ENCODE measurements at regions of chr5 and their contacts with region 1.

Region 1: GRCh38 chr5:135426102-135427082 is 20.8 kb downstream of the DCANP1 start:
- DNase-seq: peak; percentile 80 to 89 (median 88)
- H3K4me3 ChIP-seq: peak overlapping the region in 3 of 7 experiments; percentile 9 to 52 (median 12)
- H3K27ac ChIP-seq: peak overlapping the region in 1 of 2 experiments; percentile 60
- H3K4me1 ChIP-seq: peaks cover 28 to 50% (median 46%) of the 10 kb centered on the region in 4 experiments
- H3K27me3 ChIP-seq: no peaks in the 10 kb centered on the region

Region 2: DNA sequence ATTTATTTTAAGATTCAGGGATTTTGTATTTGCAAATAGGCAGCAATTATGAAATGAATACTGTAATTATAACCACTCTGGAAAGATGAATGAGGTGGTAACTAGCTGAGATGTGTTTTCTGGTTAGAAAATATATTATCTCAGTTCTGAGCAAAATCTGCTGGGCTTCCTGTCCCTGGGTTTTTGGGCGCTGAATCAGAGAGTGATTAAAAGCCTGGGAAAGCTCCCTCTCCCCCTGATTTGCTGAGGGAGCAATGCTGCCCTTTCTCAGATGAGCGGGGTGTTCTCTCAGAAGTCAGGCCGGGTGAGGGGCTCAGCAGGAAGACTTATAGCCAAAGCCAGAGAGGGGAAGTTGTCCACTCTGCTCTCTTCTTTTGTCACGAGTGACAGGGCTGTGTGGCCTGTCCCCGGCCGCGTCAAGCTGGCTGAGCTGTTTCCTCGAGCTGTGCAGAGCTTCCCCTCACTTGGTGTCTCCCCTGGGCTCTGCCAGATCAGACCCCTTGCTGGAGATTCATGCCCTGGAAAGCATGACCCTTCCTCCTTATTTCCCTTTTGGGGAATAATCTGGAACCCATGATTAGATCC is 352.5 kb before region 1 on chr5:
- CTCF ChIA-PET with region 1: no interaction called
- POLR2A ChIA-PET with region 1: no interaction called
- DNase-seq: no peak
- H3K4me3 ChIP-seq: no peak overlapping the region
- H3K27ac ChIP-seq: no peak overlapping the region
- H3K4me1 ChIP-seq: no peaks in the 10 kb centered on the region
- H3K27me3 ChIP-seq: peaks cover 0 to 16% (median 2%) of the 10 kb centered on the region in 5 experiments

Region 3: DNA sequence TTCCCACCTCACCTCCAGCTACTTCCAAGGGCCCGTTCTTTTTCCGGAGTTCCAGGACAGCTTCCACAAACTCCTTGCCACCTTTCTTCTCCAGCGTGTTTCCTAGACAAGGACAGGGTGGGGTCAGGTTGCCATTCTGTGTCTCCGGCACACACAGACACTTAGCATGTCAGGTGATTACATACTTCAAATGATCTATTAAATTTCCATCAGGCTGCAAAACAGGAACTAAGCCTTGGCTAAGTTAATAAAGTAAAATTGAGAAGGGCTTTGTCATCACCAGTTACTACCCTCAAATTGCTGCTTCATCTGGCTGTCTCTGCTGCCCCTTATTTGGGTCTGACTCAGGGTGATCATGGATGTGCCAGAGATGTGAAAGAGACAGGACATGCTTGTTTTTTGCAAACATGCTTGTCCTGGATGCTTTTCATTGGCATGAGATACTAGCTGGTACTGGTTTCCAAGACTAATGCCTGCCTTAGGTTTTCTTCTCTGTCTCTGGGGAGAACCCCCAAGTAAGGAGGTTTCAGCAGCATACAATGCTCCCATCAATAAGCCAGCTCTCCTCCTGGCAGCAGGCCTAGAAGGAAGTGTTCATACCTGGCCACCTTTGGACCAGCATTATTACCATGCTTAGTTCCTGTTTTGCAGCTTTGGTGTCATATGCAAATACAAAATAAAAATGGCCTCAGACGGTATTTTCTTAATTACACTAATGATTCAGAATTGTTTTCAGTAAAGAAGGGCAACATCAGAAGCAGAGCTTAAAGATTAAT is 80.2 kb before region 1 on chr5:
- CTCF ChIA-PET with region 1: interaction called, 11 read pairs
- POLR2A ChIA-PET with region 1: no interaction called
- DNase-seq: peak in 2 of 3 donors; percentile 51 to 65
- H3K4me3 ChIP-seq: no peak overlapping the region
- H3K27ac ChIP-seq: no peak overlapping the region
- H3K4me1 ChIP-seq: peaks cover 0 to 39% (median 22%) of the 10 kb centered on the region in 4 experiments
- H3K27me3 ChIP-seq: no peaks in the 10 kb centered on the region

Region 4: DNA sequence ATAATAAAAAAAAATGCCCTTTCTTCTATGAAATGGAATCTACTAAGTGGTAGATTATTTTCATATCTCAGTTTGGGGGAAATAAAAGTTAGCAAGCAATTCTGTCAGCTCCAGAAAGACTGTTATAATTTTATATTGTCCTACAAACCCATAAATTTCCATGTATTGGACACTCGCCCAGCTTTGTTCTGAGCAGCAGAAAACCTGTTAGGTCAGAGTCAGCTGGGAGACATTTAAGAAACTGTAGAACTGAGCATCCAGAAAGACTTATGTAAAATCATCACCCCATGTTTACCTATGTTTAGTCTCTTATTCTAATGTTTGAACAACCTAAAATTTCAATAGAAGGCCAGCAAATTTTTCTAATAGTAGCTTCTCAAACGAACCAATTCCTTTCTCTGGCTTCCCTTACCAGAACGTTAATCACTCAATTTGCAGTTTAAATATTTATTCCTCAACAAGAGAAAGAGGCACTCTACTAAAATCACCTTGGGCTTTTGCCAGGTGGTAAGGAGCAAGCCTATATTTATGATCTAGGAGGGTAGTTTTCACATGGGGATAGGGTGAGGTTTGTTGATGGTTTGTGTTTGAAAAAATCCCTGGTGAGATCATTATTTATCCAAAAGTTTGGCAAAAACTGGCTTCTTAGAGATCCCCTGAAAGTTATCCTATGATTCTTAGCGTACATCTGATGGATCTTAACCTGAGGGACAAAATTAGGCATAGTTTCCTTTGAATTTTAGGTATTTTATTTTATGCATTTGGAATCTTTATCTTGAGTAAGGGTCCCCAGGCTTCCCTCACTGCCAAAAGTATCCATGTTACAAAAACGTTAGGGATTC is 61.8 kb before region 1 on chr5:
- CTCF ChIA-PET with region 1: interaction called, 108 read pairs
- POLR2A ChIA-PET with region 1: interaction called, 4 read pairs
- DNase-seq: no peak
- H3K4me3 ChIP-seq: no peak overlapping the region
- H3K27ac ChIP-seq: peak overlapping the region in 1 of 2 experiments; percentile 55
- H3K4me1 ChIP-seq: peaks cover 16 to 86% (median 67%) of the 10 kb centered on the region in 4 experiments
- H3K27me3 ChIP-seq: no peaks in the 10 kb centered on the region

Region 5: DNA sequence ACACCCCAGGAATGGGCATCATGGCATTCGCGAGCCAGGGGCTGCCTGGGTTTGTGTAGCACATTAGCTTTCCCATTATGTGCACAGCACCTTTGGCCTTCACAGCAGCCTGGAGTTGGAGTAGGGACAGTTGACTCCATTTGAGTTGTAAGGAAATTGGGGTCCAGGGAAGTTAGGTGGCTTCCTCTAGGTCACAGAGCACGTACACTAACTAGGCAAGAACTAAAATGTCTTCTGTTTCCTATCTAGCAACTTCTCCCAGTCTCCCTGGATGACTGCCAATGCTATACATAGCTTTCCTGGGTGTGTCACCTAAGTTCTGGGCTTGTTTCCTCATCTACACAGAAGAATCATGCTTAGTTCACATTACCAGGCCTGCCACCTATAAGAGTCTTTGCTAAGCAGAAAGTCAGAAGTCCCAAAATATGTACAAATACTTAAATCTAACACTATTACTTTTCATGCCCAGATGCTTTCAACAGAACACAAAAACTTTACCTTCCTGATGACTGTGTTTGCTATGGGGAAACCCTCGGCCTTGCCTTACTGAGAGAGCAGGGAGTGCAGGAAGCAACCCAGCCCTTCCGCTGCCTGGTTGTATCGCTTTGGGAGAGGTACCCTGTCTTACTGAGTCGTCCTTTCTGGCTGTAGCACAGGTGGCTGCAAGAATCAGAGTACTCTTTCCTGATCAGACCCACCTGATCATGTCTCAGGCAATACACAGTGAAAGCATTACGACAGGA is 39.3 kb before region 1 on chr5:
- CTCF ChIA-PET with region 1: interaction called, 76 read pairs
- POLR2A ChIA-PET with region 1: no interaction called
- DNase-seq: peak in 2 of 3 donors; percentile 56 to 67
- H3K4me3 ChIP-seq: peak overlapping the region in 1 of 7 experiments; percentile 39
- H3K27ac ChIP-seq: peak overlapping the region; percentile 20 to 72
- H3K4me1 ChIP-seq: peaks cover 18 to 100% (median 82%) of the 10 kb centered on the region in 4 experiments
- H3K27me3 ChIP-seq: no peaks in the 10 kb centered on the region

Region 6: GRCh38 chr5:135405082-135405481 is 21.3 kb before region 1 on chr5:
- CTCF ChIA-PET with region 1: interaction called, 42 read pairs
- POLR2A ChIA-PET with region 1: no interaction called
- DNase-seq: no peak
- H3K4me3 ChIP-seq: no peak overlapping the region
- H3K27ac ChIP-seq: no peak overlapping the region
- H3K4me1 ChIP-seq: peaks cover 0 to 23% (median 14%) of the 10 kb centered on the region in 4 experiments
- H3K27me3 ChIP-seq: no peaks in the 10 kb centered on the region

Region 7: DNA sequence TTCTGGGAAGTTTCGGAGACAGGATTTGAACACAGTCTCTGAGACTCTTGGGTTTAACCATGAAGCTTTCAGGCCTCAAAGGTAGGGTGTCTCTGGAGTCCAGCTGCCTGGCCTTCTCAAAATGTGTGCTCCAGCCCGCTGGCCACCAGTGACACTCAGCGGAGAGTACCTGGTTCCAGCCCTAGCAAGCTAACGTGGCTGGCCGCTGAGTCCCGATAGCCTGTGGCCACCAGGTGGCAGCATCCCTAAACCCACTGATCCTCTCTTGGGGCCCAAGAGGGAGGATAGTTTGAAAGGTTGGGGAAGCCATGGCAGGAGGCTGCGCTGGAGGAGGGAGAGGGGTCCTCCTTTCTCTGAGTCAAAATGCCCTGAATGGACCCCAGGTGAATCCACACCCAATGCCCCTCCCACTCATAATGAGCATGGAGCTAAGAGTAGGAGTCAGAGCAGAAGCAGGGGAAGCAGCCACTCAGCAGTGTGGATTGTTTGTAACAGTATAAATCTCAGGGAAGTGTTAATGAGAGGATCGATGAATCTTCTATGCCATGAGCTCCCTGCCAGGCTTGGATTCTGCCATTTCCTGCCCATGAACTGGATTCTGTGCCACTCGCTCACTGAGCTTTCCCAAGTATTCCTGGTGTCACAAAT is 31.2 kb after region 1 on chr5:
- CTCF ChIA-PET with region 1: interaction called, 33 read pairs
- POLR2A ChIA-PET with region 1: no interaction called
- DNase-seq: peak; percentile 67 to 80 (median 71)
- H3K4me3 ChIP-seq: no peak overlapping the region
- H3K27ac ChIP-seq: no peak overlapping the region
- H3K4me1 ChIP-seq: peaks cover 0 to 13% (median 5%) of the 10 kb centered on the region in 4 experiments
- H3K27me3 ChIP-seq: no peaks in the 10 kb centered on the region

Measured in common myeloid progenitor, CD34-positive (primary cell).